Ascending aorta (tissue), 2 donors: ENCODE measurements at regions of chr11 and their contacts with region 1.

Region 1: DNA sequence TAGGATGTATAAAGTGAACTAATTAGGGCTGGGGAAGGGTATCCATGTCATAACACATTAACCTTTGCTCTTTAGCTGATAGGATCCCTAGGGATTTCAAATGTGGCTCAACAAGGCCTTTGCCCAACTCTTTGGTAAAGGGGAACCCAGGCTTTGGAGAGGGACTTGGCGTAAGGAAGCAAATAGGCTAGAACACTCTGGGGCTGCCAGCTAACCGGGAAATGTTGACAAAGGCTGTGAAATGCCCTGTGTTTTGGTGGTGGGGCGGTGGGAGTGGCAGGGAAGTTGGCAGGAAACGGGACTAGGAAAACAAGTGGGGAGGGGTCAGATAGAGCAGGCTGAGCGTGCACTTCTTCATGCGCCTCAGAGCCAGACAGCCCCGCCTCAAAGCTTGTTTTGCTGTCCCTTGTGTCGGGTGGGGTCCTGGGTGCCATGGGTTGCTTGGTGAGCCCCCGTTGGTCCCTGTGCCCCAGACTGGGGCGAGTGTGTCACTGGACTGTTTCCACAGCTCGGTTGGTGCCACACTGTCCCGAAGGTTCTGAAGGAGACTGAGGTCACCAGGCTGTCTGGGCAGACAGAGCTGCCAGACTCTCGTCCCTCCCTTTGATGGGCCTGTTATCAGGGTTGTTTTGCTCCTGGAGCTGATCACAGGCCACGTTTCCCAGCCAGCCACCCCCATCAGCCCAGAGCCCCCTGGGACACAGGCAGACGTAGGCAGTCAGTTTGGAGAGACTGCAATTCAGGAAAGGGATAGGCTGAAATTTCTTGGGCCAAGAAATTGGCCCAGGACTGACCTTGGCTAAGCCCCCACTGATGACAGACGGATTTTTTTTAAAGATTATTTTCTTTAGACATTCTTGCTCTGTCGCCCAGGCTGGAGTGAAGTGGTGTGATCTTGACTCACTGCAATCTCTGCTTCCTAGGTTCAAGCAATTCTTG is 19.6 kb downstream of the KCTD21 start:
- DNase-seq: peak; percentile 87 to 98
- H3K4me3 ChIP-seq: no peak overlapping the region
- H3K27ac ChIP-seq: peak overlapping the region; percentile 96
- H3K4me1 ChIP-seq: peaks cover 6 to 46% of the 10 kb centered on the region in 2 donors
- H3K27me3 ChIP-seq: no peaks in the 10 kb centered on the region
- CTCF ChIP-seq: no peak

Region 2: DNA sequence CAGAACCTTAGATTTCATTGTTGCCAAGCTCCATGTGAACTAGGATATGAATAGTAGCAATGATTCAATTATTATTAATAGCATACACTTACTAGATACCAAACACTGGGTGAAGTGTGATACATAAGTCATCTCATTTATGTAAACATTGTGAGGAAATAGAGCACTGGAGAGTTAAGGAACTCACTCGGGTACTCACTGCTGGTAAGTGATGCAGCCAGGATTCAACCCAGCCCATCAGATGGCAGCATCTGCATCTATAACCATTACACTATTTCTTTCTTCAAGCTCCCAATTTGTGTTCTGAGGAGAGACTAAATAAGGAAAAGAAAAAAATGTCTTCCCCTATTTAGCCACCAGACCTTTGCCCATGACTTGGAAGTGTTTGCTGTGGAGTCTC is 19.2 kb before region 1 on chr11:
- intact Hi-C with region 1: loop called (anchors 1 kb)
- DNase-seq: peak in 1 of 2 donors; percentile 80
- H3K4me3 ChIP-seq: no peak overlapping the region
- H3K27ac ChIP-seq: no peak overlapping the region
- H3K4me1 ChIP-seq: peaks cover 0 to 6% of the 10 kb centered on the region in 2 donors
- H3K27me3 ChIP-seq: no peaks in the 10 kb centered on the region
- CTCF ChIP-seq: peak in 2 of 3 experiments; percentile 34 to 56